ENCODE measurements at regions of chr1 and their contacts with region 1.

Region 1: GRCh38 chr1:173429471-173430402 is 47.4 kb upstream of the PRDX6 start:
- DNase-seq: peak; percentile 64
- H3K4me3 ChIP-seq: peak overlapping the region in 1 of 3 experiments; percentile 8
- H3K27ac ChIP-seq: peak overlapping the region; percentile 54
- H3K4me1 ChIP-seq: peaks cover 36% of the 10 kb centered on the region
- H3K27me3 ChIP-seq: no peaks in the 10 kb centered on the region
- CTCF ChIP-seq: peak; percentile 35 to 55

Region 2: DNA sequence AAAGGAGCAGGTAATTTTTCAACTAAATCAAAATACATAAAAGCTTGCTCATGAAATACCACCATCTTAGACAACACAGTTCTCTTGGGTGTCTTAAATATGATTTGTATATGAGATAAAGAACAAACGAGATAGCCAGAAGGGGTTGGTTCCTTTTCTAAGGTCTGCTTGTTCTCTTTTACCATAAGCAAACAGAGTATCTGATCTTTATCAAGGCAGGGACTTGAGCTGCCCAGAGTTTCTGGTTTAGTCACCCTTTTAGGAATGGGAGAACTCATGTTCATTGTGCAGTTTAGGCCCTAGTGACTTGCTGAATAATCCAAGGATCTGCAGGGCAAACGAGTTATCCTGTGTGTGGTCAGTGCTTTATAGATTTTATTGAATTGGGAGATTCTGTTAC is 899.7 kb before region 1 on chr1:
- CTCF ChIA-PET with region 1: no interaction called
- dilution Hi-C with region 1: no loop called
- in situ Hi-C with region 1: no loop called
- intact Hi-C with region 1: no loop called
- DNase-seq: peak; percentile 83
- H3K4me3 ChIP-seq: no peak overlapping the region
- H3K27ac ChIP-seq: no peak overlapping the region
- H3K4me1 ChIP-seq: peaks cover 5% of the 10 kb centered on the region
- H3K27me3 ChIP-seq: no peaks in the 10 kb centered on the region
- CTCF ChIP-seq: no peak

Region 3: GRCh38 chr1:173318788-173319187 is 110.9 kb before region 1 on chr1:
- CTCF ChIA-PET with region 1: no interaction called
- dilution Hi-C with region 1: no loop called
- in situ Hi-C with region 1: no loop called
- intact Hi-C with region 1: no loop called
- DNase-seq: no peak
- H3K4me3 ChIP-seq: no peak overlapping the region
- H3K27ac ChIP-seq: no peak overlapping the region
- H3K4me1 ChIP-seq: no peaks in the 10 kb centered on the region
- H3K27me3 ChIP-seq: no peaks in the 10 kb centered on the region
- CTCF ChIP-seq: no peak

Region 4: GRCh38 chr1:173506437-173506836 is 76.7 kb after region 1 on chr1:
- CTCF ChIA-PET with region 1: no interaction called
- dilution Hi-C with region 1: no loop called
- in situ Hi-C with region 1: no loop called
- intact Hi-C with region 1: loop called (anchors 1 kb)
- DNase-seq: no peak
- H3K4me3 ChIP-seq: no peak overlapping the region
- H3K27ac ChIP-seq: peak overlapping the region; percentile 31
- H3K4me1 ChIP-seq: peaks cover 8% of the 10 kb centered on the region
- H3K27me3 ChIP-seq: no peaks in the 10 kb centered on the region
- CTCF ChIP-seq: peak; percentile 32 to 44

Region 5: GRCh38 chr1:173527151-173527826 is 97.6 kb after region 1 on chr1:
- CTCF ChIA-PET with region 1: no interaction called
- dilution Hi-C with region 1: no loop called
- in situ Hi-C with region 1: no loop called
- intact Hi-C with region 1: no loop called
- DNase-seq: peak; percentile 70
- H3K4me3 ChIP-seq: no peak overlapping the region
- H3K27ac ChIP-seq: no peak overlapping the region
- H3K4me1 ChIP-seq: peaks cover 6% of the 10 kb centered on the region
- H3K27me3 ChIP-seq: no peaks in the 10 kb centered on the region
- CTCF ChIP-seq: no peak

Region 6: GRCh38 chr1:173714759-173715537 is 285.2 kb after region 1 on chr1 and contains the start of gene KLHL20:
- CTCF ChIA-PET with region 1: no interaction called
- dilution Hi-C with region 1: no loop called
- in situ Hi-C with region 1: no loop called
- intact Hi-C with region 1: loop called (anchors 1 kb)
- DNase-seq: peak; percentile 89
- H3K4me3 ChIP-seq: peak within 1 kb of the TSS; percentile 74 to 95 (median 84)
- H3K27ac ChIP-seq: peak within 1 kb of the TSS; percentile 47
- H3K4me1 ChIP-seq: peaks cover 4% of the 10 kb centered on the region
- H3K27me3 ChIP-seq: no peaks in the 10 kb centered on the region
- CTCF ChIP-seq: no peak
- total RNA-seq, gene KLHL20: 25.7 to 26.3 TPM

Region 7: DNA sequence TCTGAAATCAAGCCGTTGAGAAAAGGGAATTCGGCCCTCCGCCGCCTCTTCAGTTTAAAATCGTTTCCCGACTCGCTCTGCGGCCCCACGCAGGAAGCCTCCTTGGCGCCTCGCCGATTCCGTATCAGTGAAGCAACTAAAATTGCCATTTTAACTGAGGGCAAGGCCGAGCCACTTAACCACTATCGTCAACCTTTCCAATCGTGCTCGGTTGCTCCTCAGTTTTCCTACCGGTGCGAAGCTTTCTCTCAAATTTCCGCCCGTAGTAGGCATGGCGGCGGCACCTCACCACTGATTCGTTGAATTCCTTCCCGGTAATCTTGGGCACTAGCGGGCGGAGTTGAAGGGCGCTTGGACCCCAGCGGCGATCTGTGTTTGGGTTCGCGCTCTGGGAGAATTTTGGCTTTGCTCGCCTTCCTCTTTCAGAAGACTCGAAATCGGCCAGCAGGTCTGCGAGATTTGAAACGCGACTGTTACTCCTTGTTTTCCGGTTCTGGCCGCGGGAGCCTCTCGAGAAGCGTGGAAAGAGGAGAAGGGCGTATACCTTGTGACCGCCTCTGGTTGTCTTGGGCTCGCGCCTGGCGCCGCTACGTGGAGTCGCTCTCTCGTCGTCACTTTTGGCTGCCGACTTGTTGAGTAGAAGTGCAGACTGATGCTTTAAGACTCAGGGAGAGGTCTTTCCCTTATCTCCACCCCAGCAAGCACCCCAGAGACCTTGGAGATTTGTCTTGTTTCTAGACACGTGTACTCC is 394.8 kb after region 1 on chr1 and contains the starts of genes CENPL and DARS2:
- CTCF ChIA-PET with region 1: no interaction called
- dilution Hi-C with region 1: no loop called
- in situ Hi-C with region 1: loop called (anchors 10 kb)
- intact Hi-C with region 1: loop called (anchors 1 kb)
- DNase-seq: peak; percentile 97
- H3K4me3 ChIP-seq: peak within 1 kb of the TSS; percentile 77 to 100 (median 91)
- H3K27ac ChIP-seq: peak within 1 kb of the TSS; percentile 83
- H3K4me1 ChIP-seq: peaks cover 5% of the 10 kb centered on the region
- H3K27me3 ChIP-seq: no peaks in the 10 kb centered on the region
- CTCF ChIP-seq: no peak
- total RNA-seq, gene CENPL: 7.7 to 21.6 TPM
- total RNA-seq, gene DARS2: 22.3 to 29.9 TPM

Measured in mammary epithelial cell (primary cell).